HAP-1 (cell line): ENCODE measurements at regions of chr11 and their contacts with region 1.

Region 1: GRCh38 chr11:63817758-63818498 is 4.7 kb downstream of the SPINDOC start:
- DNase-seq: no peak
- H3K4me3 ChIP-seq: no peak overlapping the region
- H3K4me1 ChIP-seq: peaks cover 7% of the 10 kb centered on the region
- H3K27me3 ChIP-seq: no peaks in the 10 kb centered on the region

Region 2: DNA sequence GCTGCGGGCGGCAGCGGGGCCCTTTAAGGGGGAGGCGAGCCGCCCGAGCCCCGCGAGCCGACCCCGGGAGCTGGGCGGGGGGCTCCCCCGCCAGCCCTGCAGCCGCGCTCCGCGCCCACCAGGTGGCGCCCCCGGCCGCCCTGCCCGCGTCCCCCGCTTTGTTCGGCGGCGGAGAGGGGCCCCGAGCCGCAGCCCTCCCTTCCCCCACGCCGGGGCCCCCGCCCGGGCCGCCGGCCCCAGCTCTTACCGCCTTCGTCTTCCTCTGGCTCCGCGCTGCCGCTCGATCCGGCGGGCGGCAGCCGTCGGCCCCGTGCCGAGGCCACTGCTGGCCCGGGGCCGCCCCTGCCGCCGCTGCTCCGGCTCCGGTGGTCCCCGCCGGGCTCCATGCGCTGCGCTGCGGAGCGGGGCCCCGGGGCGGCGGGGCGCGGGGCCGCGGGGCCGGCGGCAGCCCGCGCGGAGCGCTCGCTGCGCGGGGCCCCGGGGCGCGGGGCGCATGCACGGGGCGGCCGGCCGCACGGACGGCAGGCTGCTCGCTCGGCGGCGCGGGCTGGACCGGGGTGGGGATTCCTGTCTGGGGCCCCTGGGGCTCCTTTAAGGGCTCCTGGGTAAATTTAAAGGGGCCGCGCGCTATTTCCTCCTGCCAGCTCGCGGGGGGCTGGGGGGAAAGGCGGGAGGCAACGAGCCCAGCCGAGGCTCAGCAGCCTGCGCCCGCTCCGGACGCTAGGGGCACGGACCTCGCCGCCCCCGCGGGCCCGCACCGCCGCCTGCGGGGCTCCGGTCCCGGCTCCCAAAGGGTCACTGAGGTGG is 49.5 kb before region 1 on chr11 and contains the start of gene ZFTA:
- in situ Hi-C with region 1: loop called (anchors 5 kb)
- DNase-seq: peak; percentile 64 to 82
- H3K4me3 ChIP-seq: peak within 1 kb of the TSS; percentile 61
- H3K4me1 ChIP-seq: peaks cover 10% of the 10 kb centered on the region
- H3K27me3 ChIP-seq: no peaks in the 10 kb centered on the region